GM13976 (cell line): ENCODE measurements at regions of chr19 and their contacts with region 1.

Region 1: GRCh38 chr19:40650749-40651305 is 39.6 kb downstream of the NUMBL start:
- DNase-seq: no peak
- CTCF ChIP-seq: no peak

Region 2: GRCh38 chr19:40811478-40812341 is 160.9 kb after region 1 on chr19:
- in situ Hi-C with region 1: loop called (anchors 10 kb)
- DNase-seq: no peak
- CTCF ChIP-seq: peak; percentile 20